ENCODE measurements at regions of chr3 and their contacts with region 1.

Region 1: GRCh38 chr3:136042608-136043221 is 77.2 kb downstream of the PPP2R3A start:
- DNase-seq: no peak
- H3K4me3 ChIP-seq: no peak overlapping the region
- CTCF ChIP-seq: peak; percentile 7

Region 2: GRCh38 chr3:135895106-135895733 is 147.5 kb before region 1 on chr3:
- CTCF ChIA-PET with region 1: interaction called, 35 read pairs
- POLR2A ChIA-PET with region 1: no interaction called
- DNase-seq: peak; percentile 31
- H3K4me3 ChIP-seq: no peak overlapping the region
- CTCF ChIP-seq: peak; percentile 82

Region 3: DNA sequence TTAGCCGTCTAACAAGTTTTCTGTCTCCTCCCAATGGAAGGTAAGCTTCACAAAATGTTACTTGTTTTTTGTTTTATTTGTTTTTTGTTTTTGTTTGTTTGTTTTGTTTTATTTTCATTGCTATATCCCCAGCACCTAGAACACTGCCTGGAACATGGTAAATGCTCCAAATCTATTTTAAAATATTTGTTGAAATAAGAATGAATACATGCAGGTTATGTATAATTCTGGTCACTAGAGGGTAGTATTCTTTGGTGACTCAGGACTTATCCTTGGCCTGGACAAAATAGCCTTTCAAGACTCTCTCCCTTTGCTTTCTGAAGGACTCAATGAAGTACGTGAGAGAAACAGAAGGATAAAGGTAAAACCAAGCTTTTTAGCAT is 124.1 kb before region 1 on chr3:
- CTCF ChIA-PET with region 1: interaction called, 531 read pairs
- POLR2A ChIA-PET with region 1: interaction called, 3 read pairs
- DNase-seq: no peak
- H3K4me3 ChIP-seq: no peak overlapping the region
- CTCF ChIP-seq: peak; percentile 42

Region 4: DNA sequence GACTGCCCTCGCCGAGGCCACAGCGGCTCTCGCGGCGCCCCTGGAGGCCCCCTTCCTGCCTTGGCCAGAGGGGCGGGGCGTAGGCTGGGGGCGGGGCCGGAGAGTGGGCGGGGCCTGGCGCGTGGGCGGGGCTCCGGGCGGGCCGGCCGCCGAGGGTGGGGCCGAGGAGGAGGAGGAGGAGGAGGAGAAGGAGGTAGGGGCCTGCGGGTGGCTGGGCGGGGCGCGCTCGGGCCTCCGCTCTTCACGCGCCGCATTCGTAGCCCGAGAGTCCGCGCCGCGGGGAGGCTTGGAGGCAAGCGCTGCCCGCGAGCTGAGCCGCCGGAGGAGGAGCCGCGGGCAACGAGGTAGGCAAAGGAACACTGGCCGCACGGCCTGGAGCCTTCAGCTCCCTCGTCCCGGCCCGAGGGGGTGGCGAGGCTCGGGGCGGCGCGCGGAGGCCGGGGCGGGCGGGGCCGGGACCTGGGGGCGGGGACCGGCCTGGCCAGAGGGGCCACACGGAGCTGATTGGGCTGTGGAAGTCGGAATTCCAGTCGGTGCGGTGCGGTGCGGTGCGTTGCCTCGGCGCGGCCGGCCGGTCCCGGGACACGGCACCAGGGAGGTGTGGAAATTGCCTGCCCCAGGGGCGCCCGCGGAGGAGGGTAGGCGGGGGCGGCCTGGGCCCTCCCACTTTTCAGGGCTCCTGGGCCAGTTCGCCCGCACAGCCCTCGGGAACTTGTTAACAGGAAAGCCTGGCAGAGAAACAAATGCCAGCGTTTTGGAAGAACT is 77.0 kb before region 1 on chr3 and contains the start of gene PPP2R3A:
- CTCF ChIA-PET with region 1: interaction called, 23 read pairs
- POLR2A ChIA-PET with region 1: no interaction called
- DNase-seq: peak; percentile 17
- H3K4me3 ChIP-seq: peak within 1 kb of the TSS; percentile 74
- CTCF ChIP-seq: peak; percentile 20

Region 5: GRCh38 chr3:136055491-136055890 is 12.8 kb after region 1 on chr3:
- CTCF ChIA-PET with region 1: interaction called, 31 read pairs
- POLR2A ChIA-PET with region 1: no interaction called
- DNase-seq: no peak
- H3K4me3 ChIP-seq: no peak overlapping the region
- CTCF ChIP-seq: no peak